Psoas muscle (tissue), 8 donors: ENCODE measurements at regions of chr6 and their contacts with region 1.

Region 1: GRCh38 chr6:14210663-14211561 is 93.3 kb downstream of the CD83 start:
- DNase-seq: peak; percentile 95 to 96
- ATAC-seq: peak; percentile 95 to 97 (median 96)
- H3K4me3 ChIP-seq: peak overlapping the region; percentile 82
- H3K27ac ChIP-seq: peak overlapping the region; percentile 89
- H3K4me1 ChIP-seq: peaks cover 11% of the 10 kb centered on the region
- H3K27me3 ChIP-seq: no peaks in the 10 kb centered on the region
- CTCF ChIP-seq: peak; percentile 93

Region 2: GRCh38 chr6:14100138-14100537 is 110.8 kb before region 1 on chr6:
- intact Hi-C with region 1: no loop called
- DNase-seq: no peak
- ATAC-seq: no peak
- H3K4me3 ChIP-seq: no peak overlapping the region
- H3K27ac ChIP-seq: no peak overlapping the region
- H3K4me1 ChIP-seq: no peaks in the 10 kb centered on the region
- H3K27me3 ChIP-seq: peaks cover 0 to 6% (median 4%) of the 10 kb centered on the region in 3 donors
- CTCF ChIP-seq: no peak

Region 3: GRCh38 chr6:14178083-14178445 is 32.8 kb before region 1 on chr6:
- intact Hi-C with region 1: no loop called
- DNase-seq: no peak
- ATAC-seq: no peak
- H3K4me3 ChIP-seq: no peak overlapping the region
- H3K27ac ChIP-seq: no peak overlapping the region
- H3K4me1 ChIP-seq: no peaks in the 10 kb centered on the region
- H3K27me3 ChIP-seq: no peaks in the 10 kb centered on the region
- CTCF ChIP-seq: no peak

Region 4: DNA sequence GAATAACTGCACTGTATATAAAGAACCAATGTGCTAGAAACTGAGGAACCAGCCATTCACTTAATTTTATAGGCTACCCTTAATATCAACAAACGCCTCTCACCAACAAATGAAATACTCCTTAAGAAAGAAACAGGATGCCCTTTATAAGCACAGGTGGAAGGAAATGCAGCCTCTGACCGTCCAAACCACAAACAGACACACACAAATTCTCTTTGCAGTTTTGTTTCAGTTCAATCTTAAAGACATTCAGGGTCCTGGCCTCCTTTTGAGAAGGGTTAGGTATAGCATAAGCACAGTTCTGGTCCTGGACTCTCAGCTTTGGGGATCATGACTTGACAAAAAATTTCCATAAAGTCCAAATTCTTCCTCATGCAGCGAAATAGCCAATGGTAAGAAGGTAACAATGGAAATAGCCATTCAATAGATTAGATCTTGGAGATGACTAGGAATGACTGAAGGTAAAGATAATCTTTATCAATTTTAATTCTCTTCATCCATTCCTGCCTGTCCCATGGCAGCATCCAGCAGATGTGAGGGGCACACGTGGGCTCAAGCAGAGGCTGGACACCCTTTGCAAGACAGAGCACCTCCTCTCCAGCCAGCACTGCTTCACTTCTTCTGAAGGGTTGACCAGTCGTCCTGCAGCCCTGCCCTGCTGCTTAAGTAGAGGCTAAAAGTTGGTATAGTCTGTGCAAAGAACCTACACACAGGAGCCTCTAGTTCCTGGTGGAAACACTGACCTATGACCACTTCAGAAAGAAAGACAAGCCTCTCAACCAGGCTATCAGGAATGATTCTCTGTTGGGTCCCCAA is 30.6 kb after region 1 on chr6:
- intact Hi-C with region 1: no loop called
- DNase-seq: no peak
- ATAC-seq: no peak
- H3K4me3 ChIP-seq: no peak overlapping the region
- H3K27ac ChIP-seq: no peak overlapping the region
- H3K4me1 ChIP-seq: peaks cover under 1% of the 10 kb centered on the region
- H3K27me3 ChIP-seq: no peaks in the 10 kb centered on the region
- CTCF ChIP-seq: no peak

Region 5: GRCh38 chr6:14865531-14866100 is 654.7 kb after region 1 on chr6:
- intact Hi-C with region 1: loop called (anchors 10 kb)
- DNase-seq: no peak
- ATAC-seq: no peak
- H3K4me3 ChIP-seq: no peak overlapping the region
- H3K27ac ChIP-seq: no peak overlapping the region
- H3K4me1 ChIP-seq: peaks cover under 1% of the 10 kb centered on the region
- H3K27me3 ChIP-seq: no peaks in the 10 kb centered on the region
- CTCF ChIP-seq: no peak

Region 6: GRCh38 chr6:15491255-15491985 is 1280.5 kb after region 1 on chr6:
- intact Hi-C with region 1: loop called in 1 of 2 experiments (anchors 10 kb)
- DNase-seq: peak; percentile 73 to 85
- ATAC-seq: peak; percentile 27 to 63 (median 41)
- H3K4me3 ChIP-seq: no peak overlapping the region
- H3K27ac ChIP-seq: peak overlapping the region; percentile 51
- H3K4me1 ChIP-seq: peaks cover 32% of the 10 kb centered on the region
- H3K27me3 ChIP-seq: no peaks in the 10 kb centered on the region
- CTCF ChIP-seq: peak; percentile 95